Activated CD8-positive, alpha-beta T cell treated with anti-CD3 and anti-CD28 coated beads, Interleukin-2, amount 10 ng/mL, durations not matched to agents 7 days and 5 days (primary cell): ENCODE measurements at regions of chr10 and their contacts with region 1.

Region 1: DNA sequence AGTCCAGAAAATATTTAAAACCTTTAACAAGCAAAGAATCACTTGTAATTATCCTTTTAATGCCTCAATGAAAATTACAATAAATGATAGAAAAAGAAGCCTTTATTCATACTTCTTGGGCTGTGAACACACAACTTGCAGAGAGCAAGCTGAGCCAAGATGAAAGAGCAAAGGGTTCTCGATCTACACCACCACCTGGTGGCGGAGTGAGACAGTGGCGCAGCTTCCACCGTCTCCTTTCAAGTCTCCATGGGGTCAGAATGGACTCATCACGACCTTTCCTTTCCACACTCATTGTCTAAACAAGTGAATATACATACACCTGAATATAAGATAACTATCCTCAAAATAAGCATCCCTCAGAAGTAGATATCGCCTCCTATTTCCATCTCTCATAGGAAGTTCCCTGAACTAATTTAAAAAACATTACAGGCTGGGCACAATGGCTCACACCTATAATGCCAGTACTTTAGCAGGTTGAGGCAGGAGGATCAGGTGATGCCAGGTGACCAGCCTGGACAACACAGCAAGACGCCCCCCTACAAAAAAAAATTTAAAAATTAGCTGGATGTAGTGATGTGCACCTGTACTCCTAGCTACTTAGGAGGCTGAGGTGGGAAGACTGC is 40.7 kb downstream of the ATE1 start:
- DNase-seq: peak; percentile 69
- ATAC-seq: peak; percentile 82
- H3K4me3 Mint-ChIP-seq: no peak overlapping the region
- H3K27ac Mint-ChIP-seq: no peak overlapping the region
- H3K4me1 Mint-ChIP-seq: no peaks in the 10 kb centered on the region
- H3K27me3 Mint-ChIP-seq: no peaks in the 10 kb centered on the region

Region 2: GRCh38 chr10:120948889-120949608 is 938.1 kb before region 1 on chr10:
- CTCF ChIA-PET with region 1: interaction called, 13 read pairs
- POLR2A ChIA-PET with region 1: no interaction called
- DNase-seq: peak; percentile 68
- ATAC-seq: peak; percentile 99
- H3K4me3 Mint-ChIP-seq: peak overlapping the region; percentile 22
- H3K27ac Mint-ChIP-seq: no peak overlapping the region
- H3K4me1 Mint-ChIP-seq: peaks cover 4% of the 10 kb centered on the region
- H3K27me3 Mint-ChIP-seq: peaks cover 30% of the 10 kb centered on the region

Region 3: GRCh38 chr10:121900443-121901174 is 13.5 kb after region 1 on chr10:
- CTCF ChIA-PET with region 1: interaction called, 18 read pairs
- POLR2A ChIA-PET with region 1: no interaction called
- DNase-seq: peak; percentile 32
- ATAC-seq: peak; percentile 42
- H3K4me3 Mint-ChIP-seq: no peak overlapping the region
- H3K27ac Mint-ChIP-seq: no peak overlapping the region
- H3K4me1 Mint-ChIP-seq: peaks cover 3% of the 10 kb centered on the region
- H3K27me3 Mint-ChIP-seq: no peaks in the 10 kb centered on the region

Region 4: GRCh38 chr10:121927841-121928527 is 40.9 kb after region 1 on chr10 and contains the start of gene ATE1:
- CTCF ChIA-PET with region 1: no interaction called
- POLR2A ChIA-PET with region 1: no interaction called
- DNase-seq: peak; percentile 82
- ATAC-seq: peak; percentile 96
- H3K4me3 Mint-ChIP-seq: peak within 1 kb of the TSS; percentile 88
- H3K27ac Mint-ChIP-seq: peak within 1 kb of the TSS; percentile 96
- H3K4me1 Mint-ChIP-seq: peaks cover 16% of the 10 kb centered on the region
- H3K27me3 Mint-ChIP-seq: no peaks in the 10 kb centered on the region
- total RNA-seq, gene ATE1: 20.2 to 26.0 TPM

Region 5: DNA sequence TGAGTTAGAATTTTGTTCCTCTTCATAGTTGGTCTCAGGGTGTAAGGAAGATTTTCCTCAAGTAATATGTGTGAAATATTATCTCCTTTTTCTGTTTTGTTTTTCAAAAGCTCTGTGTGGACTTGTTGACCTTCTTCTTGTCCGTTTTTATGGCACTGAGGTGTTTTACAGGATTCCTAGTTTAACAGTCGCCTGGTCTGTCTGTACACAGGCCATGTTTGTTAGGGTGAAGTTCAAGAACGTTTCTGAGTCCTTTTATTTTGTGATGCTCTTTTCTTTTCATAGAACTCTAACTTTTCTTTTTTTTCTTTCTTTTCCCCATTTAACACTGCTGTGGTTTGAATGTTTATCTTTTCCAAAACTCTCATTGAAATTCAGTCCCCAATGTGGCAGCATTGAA is 120.3 kb after region 1 on chr10:
- CTCF ChIA-PET with region 1: no interaction called
- POLR2A ChIA-PET with region 1: no interaction called
- DNase-seq: no peak
- ATAC-seq: no peak
- H3K4me3 Mint-ChIP-seq: no peak overlapping the region
- H3K27ac Mint-ChIP-seq: no peak overlapping the region
- H3K4me1 Mint-ChIP-seq: no peaks in the 10 kb centered on the region
- H3K27me3 Mint-ChIP-seq: peaks cover 3% of the 10 kb centered on the region